Activated T-helper 2 cell treated with anti-CD3 and anti-CD28 coated beads, Interferon-gamma antibody, Interleukin-2, Interleukin-4, amounts not matched to agents 10 μg/mL and 5 μg/mL and 100 μg/mL, durations not matched to agents 14 hours and 24 hours and 36 hours (primary cell): ENCODE measurements at regions of chr12 and their contacts with region 1.

Region 1: GRCh38 chr12:13218641-13219040 is 22.1 kb downstream of the EMP1 start:
- DNase-seq: no peak
- H3K4me3 Mint-ChIP-seq: no peak overlapping the region
- H3K27ac Mint-ChIP-seq: no peak overlapping the region
- H3K4me1 Mint-ChIP-seq: no peaks in the 10 kb centered on the region
- H3K27me3 Mint-ChIP-seq: peaks cover 15% of the 10 kb centered on the region

Region 2: DNA sequence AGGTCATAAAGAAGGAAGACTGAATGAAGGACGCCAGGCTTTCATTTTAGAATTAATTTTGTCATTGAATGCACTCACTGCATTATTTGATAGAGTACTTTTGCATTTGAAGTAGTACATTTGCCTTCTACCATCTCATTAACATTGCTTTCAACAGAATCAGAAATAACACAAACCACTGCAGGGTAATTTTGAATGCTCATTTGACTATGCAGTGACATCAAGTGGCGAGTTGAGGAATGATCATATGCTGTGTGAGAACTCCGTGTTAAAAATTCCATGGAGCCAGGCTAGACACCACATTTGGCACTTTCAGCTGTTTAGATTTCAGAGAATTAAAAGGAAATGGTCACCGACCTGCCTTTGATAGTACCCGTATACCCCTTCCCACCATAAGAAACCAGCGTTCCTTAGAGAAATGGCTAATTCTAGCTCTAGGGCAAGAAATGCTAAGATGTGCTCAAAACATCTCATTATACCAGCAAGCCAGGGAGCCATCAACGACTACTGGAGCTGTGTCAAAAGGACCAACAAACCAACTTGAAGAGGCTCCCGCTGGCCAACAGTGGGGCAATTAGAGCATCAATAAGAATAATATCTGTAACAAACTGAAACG is 235.1 kb before region 1 on chr12:
- intact Hi-C with region 1: loop called (anchors 5 kb)
- DNase-seq: no peak
- H3K4me3 Mint-ChIP-seq: no peak overlapping the region
- H3K27ac Mint-ChIP-seq: no peak overlapping the region
- H3K4me1 Mint-ChIP-seq: no peaks in the 10 kb centered on the region
- H3K27me3 Mint-ChIP-seq: no peaks in the 10 kb centered on the region